Right cardiac atrium (tissue), 5 donors: ENCODE measurements at regions of chr4 and their contacts with region 1.

Region 1: GRCh38 chr4:159191989-159192388 is 89.1 kb downstream of the RAPGEF2 start:
- DNase-seq: no peak
- ATAC-seq: no peak
- H3K4me3 ChIP-seq: no peak overlapping the region
- H3K27ac ChIP-seq: no peak overlapping the region
- H3K4me1 ChIP-seq: peaks cover 4% of the 10 kb centered on the region
- H3K27me3 ChIP-seq: no peaks in the 10 kb centered on the region

Region 2: DNA sequence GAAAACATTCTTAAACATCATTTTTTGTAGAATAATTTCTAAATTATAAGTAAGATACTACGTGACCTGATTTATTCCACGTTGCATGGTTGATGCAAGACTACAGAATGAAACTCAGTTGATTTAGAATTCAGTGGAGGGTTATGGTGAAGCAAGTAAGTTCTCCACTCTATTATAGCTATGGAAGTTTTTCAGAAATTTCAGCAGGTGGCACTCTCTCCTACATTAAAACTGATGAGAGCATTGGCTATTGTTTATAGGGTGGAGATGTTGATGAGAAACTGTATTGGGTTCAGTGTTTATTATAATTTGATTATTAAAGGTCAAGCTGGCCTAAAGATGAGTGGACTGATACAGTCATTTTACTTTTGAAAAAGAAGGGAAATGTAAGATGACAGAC is 335.1 kb before region 1 on chr4:
- intact Hi-C with region 1: loop called in 1 of 4 experiments (anchors 10 kb)
- DNase-seq: no peak
- ATAC-seq: peak; percentile 68 to 78
- H3K4me3 ChIP-seq: no peak overlapping the region
- H3K27ac ChIP-seq: no peak overlapping the region
- H3K4me1 ChIP-seq: no peaks in the 10 kb centered on the region
- H3K27me3 ChIP-seq: no peaks in the 10 kb centered on the region

Region 3: GRCh38 chr4:159048166-159048886 is 143.7 kb before region 1 on chr4:
- intact Hi-C with region 1: no loop called
- DNase-seq: peak; percentile 75 to 90 (median 84)
- ATAC-seq: peak; percentile 97
- H3K4me3 ChIP-seq: peak overlapping the region; percentile 20
- H3K27ac ChIP-seq: no peak overlapping the region
- H3K4me1 ChIP-seq: no peaks in the 10 kb centered on the region
- H3K27me3 ChIP-seq: no peaks in the 10 kb centered on the region